T-cell (primary cell): ENCODE measurements at regions of chr13 and their contacts with region 1.

Region 1: GRCh38 chr13:50038266-50038665 is 23.0 kb downstream of the KCNRG start:
- DNase-seq: no peak
- ATAC-seq: no peak
- H3K4me3 ChIP-seq: no peak overlapping the region
- H3K4me3 Mint-ChIP-seq: no peak overlapping the region
- H3K27ac ChIP-seq: no peak overlapping the region
- H3K27ac Mint-ChIP-seq: no peak overlapping the region
- H3K4me1 ChIP-seq: no peaks in the 10 kb centered on the region
- H3K4me1 Mint-ChIP-seq: no peaks in the 10 kb centered on the region
- H3K27me3 ChIP-seq: no peaks in the 10 kb centered on the region
- H3K27me3 Mint-ChIP-seq: no peaks in the 10 kb centered on the region

Region 2: DNA sequence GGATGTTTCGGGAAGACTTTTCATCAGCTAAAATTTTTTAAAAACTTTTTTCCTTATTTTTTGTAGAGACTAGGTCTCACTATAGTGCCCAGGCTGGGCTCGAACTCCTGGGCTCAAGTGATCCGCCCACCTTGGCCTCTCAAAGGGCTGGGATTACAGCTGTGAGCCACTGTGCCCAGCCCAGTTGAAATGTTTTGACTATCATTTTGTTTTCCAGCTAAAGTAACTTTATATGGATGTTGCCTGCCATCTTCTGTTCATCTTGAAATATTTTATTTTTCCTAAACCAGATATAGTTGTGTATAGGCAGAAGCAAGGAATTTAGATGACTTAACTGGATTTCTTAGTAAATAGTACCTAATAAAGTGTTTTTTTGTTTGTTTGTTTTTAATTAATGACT is 601.4 kb before region 1 on chr13:
- CTCF ChIA-PET with region 1: no interaction called
- POLR2A ChIA-PET with region 1: no interaction called
- DNase-seq: no peak
- ATAC-seq: no peak
- H3K4me3 ChIP-seq: no peak overlapping the region
- H3K4me3 Mint-ChIP-seq: no peak overlapping the region
- H3K27ac ChIP-seq: no peak overlapping the region
- H3K27ac Mint-ChIP-seq: no peak overlapping the region
- H3K4me1 ChIP-seq: no peaks in the 10 kb centered on the region
- H3K4me1 Mint-ChIP-seq: peaks cover 0 to 9% (median under 1%) of the 10 kb centered on the region in 3 donors
- H3K27me3 ChIP-seq: no peaks in the 10 kb centered on the region
- H3K27me3 Mint-ChIP-seq: no peaks in the 10 kb centered on the region

Region 3: GRCh38 chr13:49976314-49977258 is 61.7 kb before region 1 on chr13:
- CTCF ChIA-PET with region 1: no interaction called
- POLR2A ChIA-PET with region 1: no interaction called
- DNase-seq: peak; percentile 39 to 92 (median 71)
- ATAC-seq: peak; percentile 75 to 84 (median 81)
- H3K4me3 ChIP-seq: no peak overlapping the region
- H3K4me3 Mint-ChIP-seq: no peak overlapping the region
- H3K27ac ChIP-seq: no peak overlapping the region
- H3K27ac Mint-ChIP-seq: no peak overlapping the region
- H3K4me1 ChIP-seq: peaks cover 0 to 2% of the 10 kb centered on the region in 2 experiments
- H3K4me1 Mint-ChIP-seq: peaks cover 0 to 2% (median 2%) of the 10 kb centered on the region in 3 donors
- H3K27me3 ChIP-seq: no peaks in the 10 kb centered on the region
- H3K27me3 Mint-ChIP-seq: no peaks in the 10 kb centered on the region

Region 4: DNA sequence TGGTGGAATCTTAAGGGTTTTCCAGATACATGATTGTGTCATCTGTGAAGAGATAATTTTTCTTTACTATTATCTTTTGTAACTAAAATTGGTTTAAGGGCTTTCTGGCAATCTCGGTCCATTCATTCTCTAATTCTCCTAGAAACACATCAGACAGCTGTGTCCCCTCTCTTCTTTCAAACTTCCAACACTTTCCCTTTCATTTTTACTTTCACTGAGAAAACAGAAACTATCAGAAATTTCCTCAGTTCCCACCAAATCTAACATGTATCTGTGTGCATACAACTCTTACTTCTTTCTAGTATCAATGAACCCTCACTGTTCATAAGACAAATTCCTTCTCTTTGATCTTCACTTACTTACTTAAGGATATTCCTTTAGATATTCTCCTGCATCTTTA is 17.2 kb after region 1 on chr13:
- CTCF ChIA-PET with region 1: no interaction called
- POLR2A ChIA-PET with region 1: interaction called in 1 of 2 experiments, 21 read pairs
- DNase-seq: no peak
- ATAC-seq: no peak
- H3K4me3 ChIP-seq: no peak overlapping the region
- H3K4me3 Mint-ChIP-seq: no peak overlapping the region
- H3K27ac ChIP-seq: no peak overlapping the region
- H3K27ac Mint-ChIP-seq: peak overlapping the region in 1 of 2 donors; percentile 16
- H3K4me1 ChIP-seq: no peaks in the 10 kb centered on the region
- H3K4me1 Mint-ChIP-seq: peaks cover 6 to 33% (median 14%) of the 10 kb centered on the region in 3 donors
- H3K27me3 ChIP-seq: no peaks in the 10 kb centered on the region
- H3K27me3 Mint-ChIP-seq: no peaks in the 10 kb centered on the region

Region 5: DNA sequence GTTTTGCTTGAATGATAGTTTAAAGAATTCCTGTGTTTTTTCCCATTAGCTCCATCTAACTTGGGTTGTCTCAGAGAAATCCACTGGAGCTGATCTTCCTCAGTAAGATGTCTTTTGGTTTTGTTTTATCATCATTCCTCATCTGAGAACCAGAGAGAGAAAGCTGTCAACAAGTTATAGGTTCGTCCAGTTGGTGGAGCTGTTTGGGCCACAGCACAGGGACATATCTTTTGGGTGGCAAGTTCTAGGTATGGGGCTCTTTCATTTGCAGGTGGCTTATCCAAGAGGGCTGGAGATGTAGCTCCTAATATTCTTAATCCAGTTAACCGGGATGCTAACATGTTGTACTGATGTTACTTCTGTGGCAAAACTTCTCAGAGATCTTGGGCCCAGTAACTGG is 151.2 kb after region 1 on chr13:
- CTCF ChIA-PET with region 1: no interaction called
- POLR2A ChIA-PET with region 1: no interaction called
- DNase-seq: peak in 1 of 35 experiments; percentile 28
- ATAC-seq: no peak
- H3K4me3 ChIP-seq: no peak overlapping the region
- H3K4me3 Mint-ChIP-seq: no peak overlapping the region
- H3K27ac ChIP-seq: no peak overlapping the region
- H3K27ac Mint-ChIP-seq: peak overlapping the region in 1 of 2 donors; percentile 33
- H3K4me1 ChIP-seq: no peaks in the 10 kb centered on the region
- H3K4me1 Mint-ChIP-seq: peaks cover 0 to 41% (median 9%) of the 10 kb centered on the region in 3 donors
- H3K27me3 ChIP-seq: no peaks in the 10 kb centered on the region
- H3K27me3 Mint-ChIP-seq: no peaks in the 10 kb centered on the region